CD8-positive, alpha-beta memory T cell (primary cell): ENCODE measurements at regions of chr5 and their contacts with region 1.

Region 1: GRCh38 chr5:149828161-149828884 is 98.2 kb downstream of the PPARGC1B start:
- DNase-seq: peak; percentile 50 to 81 (median 69)
- H3K4me3 ChIP-seq: no peak overlapping the region
- H3K4me3 Mint-ChIP-seq: no peak overlapping the region
- H3K27ac ChIP-seq: no peak overlapping the region
- H3K27ac Mint-ChIP-seq: peak overlapping the region in 2 of 8 donors; percentile 1 to 57
- H3K4me1 ChIP-seq: no peaks in the 10 kb centered on the region
- H3K4me1 Mint-ChIP-seq: peaks cover 1 to 5% (median 2%) of the 10 kb centered on the region in 3 donors
- H3K27me3 ChIP-seq: no peaks in the 10 kb centered on the region
- H3K27me3 Mint-ChIP-seq: no peaks in the 10 kb centered on the region

Region 2: GRCh38 chr5:149559712-149560111 is 268.6 kb before region 1 on chr5:
- CTCF ChIA-PET with region 1: no interaction called
- POLR2A ChIA-PET with region 1: no interaction called
- DNase-seq: no peak
- H3K4me3 ChIP-seq: no peak overlapping the region
- H3K4me3 Mint-ChIP-seq: peak overlapping the region in 1 of 7 donors; percentile 5
- H3K27ac ChIP-seq: no peak overlapping the region
- H3K27ac Mint-ChIP-seq: no peak overlapping the region
- H3K4me1 ChIP-seq: peaks cover 20% of the 10 kb centered on the region
- H3K4me1 Mint-ChIP-seq: no peaks in the 10 kb centered on the region
- H3K27me3 ChIP-seq: no peaks in the 10 kb centered on the region
- H3K27me3 Mint-ChIP-seq: no peaks in the 10 kb centered on the region

Region 3: GRCh38 chr5:149636851-149637246 is 191.5 kb before region 1 on chr5:
- CTCF ChIA-PET with region 1: interaction called, 166 read pairs
- POLR2A ChIA-PET with region 1: no interaction called
- DNase-seq: peak in 4 of 5 donors; percentile 47 to 71 (median 51)
- H3K4me3 ChIP-seq: no peak overlapping the region
- H3K4me3 Mint-ChIP-seq: no peak overlapping the region
- H3K27ac ChIP-seq: no peak overlapping the region
- H3K27ac Mint-ChIP-seq: no peak overlapping the region
- H3K4me1 ChIP-seq: no peaks in the 10 kb centered on the region
- H3K4me1 Mint-ChIP-seq: peaks cover 0 to 3% (median 0%) of the 10 kb centered on the region in 3 donors
- H3K27me3 ChIP-seq: no peaks in the 10 kb centered on the region
- H3K27me3 Mint-ChIP-seq: peaks cover 0 to 2% of the 10 kb centered on the region in 2 donors

Region 4: DNA sequence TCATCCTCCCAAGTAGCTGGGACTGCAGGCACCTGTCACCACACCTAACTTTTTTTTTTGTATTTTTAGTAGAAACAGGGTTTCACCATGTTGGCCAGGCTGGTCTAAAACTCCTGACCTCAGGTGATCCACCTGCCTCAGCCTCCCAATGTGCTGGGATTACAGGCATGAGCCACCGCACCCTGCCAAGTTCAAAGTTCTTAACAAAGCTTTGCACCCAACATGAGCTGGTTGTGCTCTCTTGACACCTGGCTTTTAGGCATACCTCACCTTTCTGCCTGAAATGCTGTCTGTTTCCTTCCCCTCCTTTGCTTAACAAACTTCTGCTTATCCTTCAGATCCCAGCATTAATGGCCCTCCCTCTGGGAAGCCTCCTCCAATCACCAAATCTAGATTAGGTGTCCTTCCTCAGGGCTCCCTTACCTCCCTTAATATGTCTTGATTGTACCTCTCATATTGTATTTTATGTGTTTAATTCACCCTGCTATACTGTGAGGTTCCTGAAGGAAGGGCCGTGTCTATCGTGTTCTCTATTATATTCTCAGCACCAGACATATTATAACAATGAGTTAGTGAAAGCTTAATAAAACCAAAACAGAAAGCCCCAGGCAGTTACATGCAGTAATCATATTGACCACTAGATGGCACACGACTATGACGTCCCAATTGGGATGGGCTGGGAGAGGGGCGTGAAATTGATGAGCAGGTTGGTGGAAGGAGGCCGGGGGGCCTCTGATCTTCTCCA is 161.1 kb before region 1 on chr5:
- CTCF ChIA-PET with region 1: interaction called, 11 read pairs
- POLR2A ChIA-PET with region 1: no interaction called
- DNase-seq: no peak
- H3K4me3 ChIP-seq: no peak overlapping the region
- H3K4me3 Mint-ChIP-seq: no peak overlapping the region
- H3K27ac ChIP-seq: no peak overlapping the region
- H3K27ac Mint-ChIP-seq: no peak overlapping the region
- H3K4me1 ChIP-seq: no peaks in the 10 kb centered on the region
- H3K4me1 Mint-ChIP-seq: no peaks in the 10 kb centered on the region
- H3K27me3 ChIP-seq: no peaks in the 10 kb centered on the region
- H3K27me3 Mint-ChIP-seq: peaks cover 2 to 21% of the 10 kb centered on the region in 2 donors

Region 5: DNA sequence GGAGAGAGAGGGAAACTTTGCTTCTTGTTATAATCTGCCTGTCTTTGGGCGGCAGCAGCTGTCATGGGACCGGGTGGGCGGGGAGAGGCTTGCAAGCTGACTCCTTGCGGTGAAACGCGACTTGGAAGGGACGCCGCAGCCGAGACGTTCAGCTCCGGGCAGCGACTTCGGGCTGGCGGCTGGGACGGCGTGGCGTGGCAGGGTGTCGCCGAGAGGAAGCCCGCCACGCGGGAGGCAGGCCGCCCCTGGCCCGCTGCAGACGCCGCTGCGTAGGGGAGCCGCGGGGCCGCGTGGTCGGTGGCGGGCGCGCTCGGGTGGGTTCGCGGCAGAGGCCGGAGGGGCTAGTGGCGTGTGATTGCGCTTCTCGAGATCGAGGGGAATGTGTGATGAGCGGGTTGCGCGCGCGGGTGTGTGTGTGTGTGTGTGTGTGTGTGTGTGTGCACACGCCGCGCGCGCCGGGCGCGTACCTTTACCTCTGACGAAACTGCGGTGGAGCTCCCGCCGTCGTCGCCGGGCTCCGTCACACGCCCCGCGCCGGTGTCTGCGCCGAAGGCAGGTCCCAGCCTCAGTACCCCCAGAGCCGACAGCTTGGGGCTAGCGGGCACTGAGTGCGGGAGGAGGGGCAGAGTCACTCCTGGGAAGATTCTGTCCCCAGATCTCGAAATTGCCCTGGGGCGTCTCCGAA is 96.5 kb before region 1 on chr5:
- CTCF ChIA-PET with region 1: no interaction called
- POLR2A ChIA-PET with region 1: no interaction called
- DNase-seq: peak; percentile 51 to 81 (median 59)
- H3K4me3 ChIP-seq: peak overlapping the region; percentile 77
- H3K4me3 Mint-ChIP-seq: peak overlapping the region; percentile 85 to 93 (median 86)
- H3K27ac ChIP-seq: peak overlapping the region; percentile 57
- H3K27ac Mint-ChIP-seq: peak overlapping the region in 6 of 8 donors; percentile 32 to 87 (median 80)
- H3K4me1 ChIP-seq: peaks cover 4% of the 10 kb centered on the region
- H3K4me1 Mint-ChIP-seq: peaks cover 3 to 6% (median 5%) of the 10 kb centered on the region in 3 donors
- H3K27me3 ChIP-seq: no peaks in the 10 kb centered on the region
- H3K27me3 Mint-ChIP-seq: no peaks in the 10 kb centered on the region

Region 6: DNA sequence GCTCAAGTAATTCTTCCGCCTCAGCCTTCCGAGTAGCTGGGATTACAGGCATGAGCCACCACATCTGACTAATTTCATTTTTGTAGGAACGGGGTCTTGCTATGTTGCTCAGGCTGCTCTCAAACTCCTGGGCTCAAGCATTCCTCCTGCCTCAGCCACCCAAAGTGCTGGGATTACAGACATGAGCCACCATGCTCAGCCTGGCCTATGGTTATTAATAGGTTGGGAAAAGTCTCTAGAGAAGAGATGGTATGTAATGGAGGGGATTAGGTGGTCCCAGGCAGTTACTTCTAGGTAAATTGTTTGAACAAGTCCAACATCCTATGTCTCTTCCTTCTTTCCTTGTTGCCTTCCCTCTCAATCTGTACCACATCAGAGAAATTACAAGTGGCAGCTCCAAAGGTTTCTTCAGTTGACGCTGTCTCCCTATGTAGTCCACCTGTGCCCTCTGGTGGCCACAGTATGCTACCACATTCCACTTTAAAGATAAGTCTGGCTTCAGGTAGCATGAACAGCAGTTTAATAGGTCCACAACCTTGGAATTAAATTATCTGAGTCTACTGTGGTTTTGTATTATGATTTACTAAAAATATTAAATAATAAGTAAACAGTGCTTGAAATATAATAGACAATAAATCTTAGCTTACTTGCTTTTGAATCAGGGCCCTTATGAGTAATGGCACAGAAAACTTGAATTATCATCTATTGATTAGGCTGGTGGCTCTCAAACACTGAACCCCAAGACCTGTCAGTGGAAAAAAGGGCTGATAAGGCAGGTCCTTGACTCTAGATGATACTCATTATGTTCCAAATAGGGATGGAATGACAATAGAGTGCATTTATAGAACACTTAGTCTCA is 162.4 kb after region 1 on chr5:
- CTCF ChIA-PET with region 1: interaction called, 69 read pairs
- POLR2A ChIA-PET with region 1: no interaction called
- DNase-seq: peak; percentile 46 to 76 (median 49)
- H3K4me3 ChIP-seq: no peak overlapping the region
- H3K4me3 Mint-ChIP-seq: no peak overlapping the region
- H3K27ac ChIP-seq: no peak overlapping the region
- H3K27ac Mint-ChIP-seq: no peak overlapping the region
- H3K4me1 ChIP-seq: no peaks in the 10 kb centered on the region
- H3K4me1 Mint-ChIP-seq: no peaks in the 10 kb centered on the region
- H3K27me3 ChIP-seq: no peaks in the 10 kb centered on the region
- H3K27me3 Mint-ChIP-seq: no peaks in the 10 kb centered on the region